CD8-positive, alpha-beta T cell (primary cell): ENCODE measurements at regions of chr20 and their contacts with region 1.

Region 1: GRCh38 chr20:48828022-48828743 is 384 bp upstream of the PREX1 start:
- DNase-seq: peak; percentile 72 to 94 (median 83)
- ATAC-seq: peak; percentile 69
- H3K4me3 ChIP-seq: peak overlapping the region in 1 of 2 experiments; percentile 49
- H3K4me3 Mint-ChIP-seq: peak overlapping the region; percentile 86
- H3K27ac ChIP-seq: peak overlapping the region; percentile 39 to 47
- H3K27ac Mint-ChIP-seq: peak overlapping the region; percentile 90
- H3K4me1 ChIP-seq: peaks cover 33% of the 10 kb centered on the region
- H3K4me1 Mint-ChIP-seq: peaks cover 35% of the 10 kb centered on the region
- H3K27me3 ChIP-seq: no peaks in the 10 kb centered on the region
- H3K27me3 Mint-ChIP-seq: no peaks in the 10 kb centered on the region
- CTCF ChIP-seq: no peak

Region 2: GRCh38 chr20:48657475-48658470 is 170.4 kb before region 1 on chr20:
- CTCF ChIA-PET with region 1: interaction called, 19 read pairs
- POLR2A ChIA-PET with region 1: no interaction called
- intact Hi-C with region 1: no loop called
- DNase-seq: peak; percentile 26 to 83 (median 68)
- ATAC-seq: peak; percentile 93
- H3K4me3 ChIP-seq: no peak overlapping the region
- H3K4me3 Mint-ChIP-seq: no peak overlapping the region
- H3K27ac ChIP-seq: no peak overlapping the region
- H3K27ac Mint-ChIP-seq: peak overlapping the region; percentile 74
- H3K4me1 ChIP-seq: no peaks in the 10 kb centered on the region
- H3K4me1 Mint-ChIP-seq: peaks cover 23% of the 10 kb centered on the region
- H3K27me3 ChIP-seq: no peaks in the 10 kb centered on the region
- H3K27me3 Mint-ChIP-seq: no peaks in the 10 kb centered on the region
- CTCF ChIP-seq: peak; percentile 96

Region 3: DNA sequence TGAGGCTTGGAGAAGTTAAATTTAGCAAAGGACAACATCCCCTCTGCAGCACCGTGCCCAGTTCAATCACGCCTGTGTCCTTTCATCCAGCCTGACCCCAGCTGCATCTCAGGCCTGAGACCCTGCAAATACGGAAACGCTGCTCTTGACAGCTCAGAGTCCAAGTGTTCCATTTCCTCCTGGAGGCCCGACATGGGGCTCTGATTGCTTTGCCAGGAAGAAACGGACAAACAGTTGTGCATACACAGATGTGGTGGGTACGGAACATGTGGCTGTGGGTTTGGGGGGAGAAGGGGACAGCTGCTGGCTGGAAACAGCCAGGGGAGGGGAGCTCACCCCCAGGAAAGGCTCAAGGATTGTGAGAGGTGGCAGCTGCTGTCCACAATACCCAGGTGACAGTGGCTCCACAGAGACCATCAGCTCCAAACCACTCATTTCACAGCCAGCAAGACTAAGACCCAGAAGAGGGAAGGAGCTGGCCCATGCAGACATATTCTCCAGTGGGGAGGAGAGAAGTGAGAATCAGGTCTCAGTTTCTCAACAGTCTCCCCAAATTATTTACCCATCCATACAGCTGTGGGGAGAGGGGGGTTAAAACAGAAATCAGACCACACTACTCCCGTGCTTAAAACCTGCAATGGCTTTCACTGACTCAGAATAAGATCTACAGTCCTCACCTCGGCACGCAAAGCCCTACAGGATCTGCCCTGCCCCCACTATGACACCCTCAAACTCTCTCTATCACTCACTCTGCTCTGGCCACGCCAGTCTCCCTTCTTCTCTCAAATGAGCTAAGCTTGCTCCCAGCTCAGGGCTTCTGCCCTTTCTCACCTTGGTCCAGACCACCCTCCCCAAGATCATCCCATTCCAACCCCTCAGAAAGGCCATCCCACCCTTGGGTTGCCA is 89.5 kb before region 1 on chr20:
- CTCF ChIA-PET with region 1: no interaction called
- POLR2A ChIA-PET with region 1: interaction called, 10 read pairs
- intact Hi-C with region 1: no loop called
- DNase-seq: peak in 6 of 9 experiments; percentile 39 to 72 (median 58)
- ATAC-seq: peak; percentile 78
- H3K4me3 ChIP-seq: no peak overlapping the region
- H3K4me3 Mint-ChIP-seq: peak overlapping the region; percentile 50
- H3K27ac ChIP-seq: peak overlapping the region in 1 of 2 experiments; percentile 55
- H3K27ac Mint-ChIP-seq: peak overlapping the region; percentile 89
- H3K4me1 ChIP-seq: peaks cover 61% of the 10 kb centered on the region
- H3K4me1 Mint-ChIP-seq: peaks cover 63% of the 10 kb centered on the region
- H3K27me3 ChIP-seq: no peaks in the 10 kb centered on the region
- H3K27me3 Mint-ChIP-seq: no peaks in the 10 kb centered on the region
- CTCF ChIP-seq: no peak

Region 4: GRCh38 chr20:48760403-48760983 is 67.7 kb before region 1 on chr20:
- CTCF ChIA-PET with region 1: interaction called, 4 read pairs
- POLR2A ChIA-PET with region 1: interaction called, 18 read pairs
- intact Hi-C with region 1: loop called (anchors 1 kb)
- DNase-seq: peak; percentile 34 to 95 (median 82)
- ATAC-seq: peak; percentile 69
- H3K4me3 ChIP-seq: peak overlapping the region; percentile 36 to 51
- H3K4me3 Mint-ChIP-seq: peak overlapping the region; percentile 76
- H3K27ac ChIP-seq: peak overlapping the region; percentile 87 to 93
- H3K27ac Mint-ChIP-seq: peak overlapping the region; percentile 99
- H3K4me1 ChIP-seq: peaks cover 78% of the 10 kb centered on the region
- H3K4me1 Mint-ChIP-seq: peaks cover 86% of the 10 kb centered on the region
- H3K27me3 ChIP-seq: no peaks in the 10 kb centered on the region
- H3K27me3 Mint-ChIP-seq: no peaks in the 10 kb centered on the region
- CTCF ChIP-seq: no peak

Region 5: DNA sequence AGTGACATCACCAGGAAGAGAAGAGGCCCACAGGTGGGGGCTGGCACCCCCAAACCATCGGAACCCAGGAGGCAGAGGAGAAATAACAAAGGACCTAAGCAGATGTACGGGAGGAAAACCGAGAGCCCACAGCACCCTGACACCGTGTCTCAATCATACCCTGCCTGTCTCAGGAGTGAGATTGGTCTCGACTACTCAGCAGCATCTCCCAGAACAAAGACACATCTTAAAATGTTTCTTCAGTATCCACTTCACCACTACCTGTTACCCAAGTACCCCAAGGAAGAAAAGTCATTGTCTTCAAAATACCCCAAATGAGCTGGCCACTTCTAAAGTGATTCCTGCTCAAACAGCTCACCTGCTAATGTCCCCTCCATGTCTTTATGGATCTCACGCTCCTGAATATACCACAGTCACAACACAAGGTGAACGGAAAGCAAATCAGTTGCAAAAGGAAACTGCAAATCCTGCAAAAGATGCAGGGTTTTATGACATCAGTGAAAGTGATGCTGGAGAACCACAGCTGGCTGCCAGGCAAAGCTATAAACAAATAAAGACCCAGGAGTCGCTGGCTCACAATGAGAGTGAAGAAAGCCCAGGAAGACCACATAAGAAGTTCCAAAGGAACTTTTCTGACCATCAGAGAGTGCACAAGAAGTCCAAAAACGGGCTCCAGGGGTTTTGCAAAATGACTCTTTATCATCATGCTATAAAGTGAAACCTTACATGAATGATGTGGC is 44.5 kb before region 1 on chr20:
- CTCF ChIA-PET with region 1: interaction called, 4 read pairs
- POLR2A ChIA-PET with region 1: no interaction called
- intact Hi-C with region 1: loop called in 1 of 2 experiments (anchors 5 kb)
- DNase-seq: peak in 5 of 9 experiments; percentile 35 to 83 (median 57)
- ATAC-seq: peak; percentile 69
- H3K4me3 ChIP-seq: no peak overlapping the region
- H3K4me3 Mint-ChIP-seq: no peak overlapping the region
- H3K27ac ChIP-seq: peak overlapping the region; percentile 4 to 58
- H3K27ac Mint-ChIP-seq: no peak overlapping the region
- H3K4me1 ChIP-seq: peaks cover 68% of the 10 kb centered on the region
- H3K4me1 Mint-ChIP-seq: peaks cover 53% of the 10 kb centered on the region
- H3K27me3 ChIP-seq: no peaks in the 10 kb centered on the region
- H3K27me3 Mint-ChIP-seq: no peaks in the 10 kb centered on the region
- CTCF ChIP-seq: no peak

Region 6: DNA sequence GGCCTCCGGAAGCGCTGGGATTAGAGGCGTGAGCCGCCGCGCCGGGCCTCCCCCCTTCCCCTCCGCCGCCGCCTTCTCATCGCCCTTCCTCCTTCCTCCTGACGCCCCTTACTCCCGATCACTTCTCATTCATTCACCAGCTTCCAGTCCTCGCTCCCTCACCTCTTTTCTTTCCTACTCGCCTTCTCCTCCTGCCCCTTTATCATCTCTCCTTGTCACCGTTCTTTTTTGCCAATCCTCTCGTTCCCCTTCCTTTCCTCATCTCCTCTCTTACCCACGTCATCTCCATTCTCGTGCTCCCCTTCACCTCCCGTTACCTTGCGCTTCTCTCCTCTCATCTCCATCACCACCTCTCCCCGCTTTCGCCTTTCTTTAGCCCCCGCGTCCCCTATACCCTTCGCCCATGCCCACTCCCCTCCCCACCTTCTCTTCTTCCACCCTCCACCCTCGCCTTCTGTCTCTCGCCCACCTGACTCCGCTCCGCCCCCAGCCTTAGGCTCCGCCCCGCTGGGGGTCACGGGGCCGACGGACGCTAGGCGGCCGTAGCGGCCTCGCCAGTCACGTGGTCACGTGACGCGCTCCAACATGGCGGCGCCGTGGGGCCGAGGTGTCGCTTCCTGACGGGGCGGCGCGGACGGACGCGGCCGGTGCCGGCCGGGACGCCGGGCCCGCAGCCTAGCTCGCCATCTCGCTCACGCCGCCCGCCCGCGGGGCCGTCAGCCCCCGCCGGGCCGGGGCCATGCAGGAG is 93.1 kb after region 1 on chr20 and contains the start of gene ARFGEF2:
- CTCF ChIA-PET with region 1: no interaction called
- POLR2A ChIA-PET with region 1: no interaction called
- intact Hi-C with region 1: loop called (anchors 1 kb)
- DNase-seq: peak; percentile 79 to 96 (median 89)
- ATAC-seq: peak; percentile 92
- H3K4me3 ChIP-seq: peak within 1 kb of the TSS; percentile 77 to 99
- H3K4me3 Mint-ChIP-seq: peak within 1 kb of the TSS; percentile 93
- H3K27ac ChIP-seq: peak within 1 kb of the TSS; percentile 93 to 94
- H3K27ac Mint-ChIP-seq: peak within 1 kb of the TSS; percentile 95
- H3K4me1 ChIP-seq: peaks cover 28% of the 10 kb centered on the region
- H3K4me1 Mint-ChIP-seq: peaks cover 49% of the 10 kb centered on the region
- H3K27me3 ChIP-seq: no peaks in the 10 kb centered on the region
- H3K27me3 Mint-ChIP-seq: no peaks in the 10 kb centered on the region
- CTCF ChIP-seq: no peak
- total RNA-seq, gene ARFGEF2: 25.7 to 26.7 TPM

Region 7: DNA sequence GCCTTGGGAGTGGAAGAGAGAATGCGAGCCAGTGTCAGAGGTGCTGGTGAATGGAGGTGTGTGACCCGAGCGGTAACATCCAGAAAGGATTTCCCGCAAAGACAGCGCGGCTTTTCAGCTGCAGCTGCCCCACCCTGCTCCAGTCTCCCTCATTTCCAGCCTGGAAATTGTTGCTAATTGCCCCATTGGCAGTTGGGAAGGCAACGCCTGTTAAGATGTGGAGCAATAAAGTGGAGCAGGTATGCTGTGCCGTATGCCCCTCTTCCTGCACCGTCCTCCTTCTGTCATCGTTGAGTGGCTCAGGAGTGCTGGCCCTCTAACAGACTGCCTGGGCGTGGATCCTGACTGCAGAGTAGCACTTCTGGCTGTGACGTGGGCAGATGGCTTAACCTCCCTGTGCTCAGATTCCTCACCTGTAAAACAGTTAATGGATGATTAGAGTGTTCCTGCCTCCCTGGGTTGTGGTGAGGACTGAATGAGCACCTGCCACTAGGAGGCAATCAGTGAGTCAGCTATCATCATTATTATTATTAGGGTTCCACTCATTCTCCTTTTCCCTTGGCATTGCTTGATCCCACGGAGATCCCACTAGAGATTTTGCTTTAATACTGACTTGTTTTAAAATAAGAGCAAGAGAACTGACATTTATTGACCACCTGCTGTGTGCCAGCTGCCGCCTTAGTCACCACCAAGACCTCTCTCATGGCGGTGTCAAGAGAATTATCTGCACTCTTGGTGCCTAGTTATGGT is 105.0 kb after region 1 on chr20:
- CTCF ChIA-PET with region 1: no interaction called
- POLR2A ChIA-PET with region 1: no interaction called
- intact Hi-C with region 1: no loop called
- DNase-seq: no peak
- ATAC-seq: no peak
- H3K4me3 ChIP-seq: no peak overlapping the region
- H3K4me3 Mint-ChIP-seq: no peak overlapping the region
- H3K27ac ChIP-seq: no peak overlapping the region
- H3K27ac Mint-ChIP-seq: no peak overlapping the region
- H3K4me1 ChIP-seq: peaks cover 5% of the 10 kb centered on the region
- H3K4me1 Mint-ChIP-seq: peaks cover 33% of the 10 kb centered on the region
- H3K27me3 ChIP-seq: no peaks in the 10 kb centered on the region
- H3K27me3 Mint-ChIP-seq: no peaks in the 10 kb centered on the region
- CTCF ChIP-seq: no peak

Region 8: DNA sequence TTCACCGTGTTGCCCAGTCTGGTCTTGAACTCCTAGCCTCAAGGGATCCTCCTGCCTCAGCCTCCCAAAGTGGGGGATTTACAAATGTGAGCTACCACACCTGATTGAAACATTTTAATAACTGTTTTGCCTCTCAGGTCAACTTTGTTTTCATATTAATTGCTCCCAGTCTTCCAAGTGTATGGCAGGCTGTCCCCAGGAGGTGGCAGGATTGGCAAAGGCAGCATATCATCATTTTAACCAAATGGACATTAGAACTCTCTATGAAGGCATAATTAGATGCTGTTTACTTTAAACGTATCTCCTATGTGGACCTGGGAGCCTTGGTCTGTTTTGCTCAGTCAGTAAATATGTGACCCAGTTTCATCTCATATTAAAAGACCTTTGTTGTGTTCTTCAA is 158.7 kb after region 1 on chr20:
- CTCF ChIA-PET with region 1: no interaction called
- POLR2A ChIA-PET with region 1: no interaction called
- intact Hi-C with region 1: no loop called
- DNase-seq: no peak
- ATAC-seq: no peak
- H3K4me3 ChIP-seq: no peak overlapping the region
- H3K4me3 Mint-ChIP-seq: no peak overlapping the region
- H3K27ac ChIP-seq: no peak overlapping the region
- H3K27ac Mint-ChIP-seq: no peak overlapping the region
- H3K4me1 ChIP-seq: no peaks in the 10 kb centered on the region
- H3K4me1 Mint-ChIP-seq: no peaks in the 10 kb centered on the region
- H3K27me3 ChIP-seq: no peaks in the 10 kb centered on the region
- H3K27me3 Mint-ChIP-seq: no peaks in the 10 kb centered on the region
- CTCF ChIP-seq: no peak

Region 9: DNA sequence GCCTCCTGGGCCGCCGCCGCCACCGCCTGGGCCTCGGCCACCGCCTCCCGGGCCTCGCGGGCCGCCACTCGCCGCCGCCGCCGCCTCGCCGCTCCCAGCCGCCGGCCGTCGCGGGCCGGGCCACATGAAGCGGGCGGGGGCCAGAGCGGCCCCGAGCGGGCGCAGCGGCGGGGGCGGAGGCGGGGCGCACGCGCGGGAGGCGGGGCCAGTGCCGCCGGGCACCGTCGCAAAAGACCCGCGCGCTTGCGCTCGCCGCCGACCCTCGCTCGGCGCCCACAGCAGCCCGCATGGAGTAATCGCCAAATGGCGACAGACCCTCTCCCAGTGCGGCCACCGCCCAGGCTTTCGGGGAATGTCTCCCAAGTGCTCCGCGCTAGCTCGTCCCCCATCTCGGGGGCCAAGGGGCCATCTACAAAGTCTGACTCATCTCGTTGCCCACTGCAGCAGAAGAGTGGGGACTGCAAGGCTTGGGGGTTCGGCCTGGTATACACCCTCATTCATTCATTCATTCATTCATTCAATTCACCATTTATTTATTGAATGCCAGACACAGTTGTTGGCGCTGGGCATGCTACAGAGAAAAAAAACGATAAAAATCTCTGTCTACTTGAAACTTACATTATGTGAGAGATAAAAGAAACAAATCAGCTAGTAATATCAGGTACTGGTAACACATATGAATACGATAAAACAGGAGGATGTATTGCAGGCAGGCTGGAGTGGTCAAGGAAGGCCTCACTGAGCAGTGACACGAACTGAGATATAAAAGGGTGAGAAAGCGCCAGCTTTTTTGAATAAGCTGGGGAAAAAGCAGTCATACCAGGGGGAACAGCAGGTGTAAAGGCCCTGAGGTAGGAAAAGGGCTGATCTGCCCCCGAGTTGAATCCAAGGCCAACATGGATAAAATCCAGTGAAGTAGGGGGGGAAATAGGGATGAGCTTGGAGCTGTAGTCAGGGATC is 885.9 kb after region 1 on chr20 and contains the start of gene B4GALT5:
- CTCF ChIA-PET with region 1: no interaction called
- POLR2A ChIA-PET with region 1: no interaction called
- intact Hi-C with region 1: loop called (anchors 5 kb)
- DNase-seq: peak; percentile 26 to 83 (median 59)
- ATAC-seq: peak; percentile 85
- H3K4me3 ChIP-seq: peak within 1 kb of the TSS; percentile 79 to 86
- H3K4me3 Mint-ChIP-seq: peak within 1 kb of the TSS; percentile 94
- H3K27ac ChIP-seq: peak within 1 kb of the TSS; percentile 51 to 75
- H3K27ac Mint-ChIP-seq: peak within 1 kb of the TSS; percentile 87
- H3K4me1 ChIP-seq: peaks cover 32% of the 10 kb centered on the region
- H3K4me1 Mint-ChIP-seq: peaks cover 49% of the 10 kb centered on the region
- H3K27me3 ChIP-seq: no peaks in the 10 kb centered on the region
- H3K27me3 Mint-ChIP-seq: no peaks in the 10 kb centered on the region
- CTCF ChIP-seq: no peak
- total RNA-seq, gene B4GALT5: 7.8 to 7.9 TPM

Region 10: DNA sequence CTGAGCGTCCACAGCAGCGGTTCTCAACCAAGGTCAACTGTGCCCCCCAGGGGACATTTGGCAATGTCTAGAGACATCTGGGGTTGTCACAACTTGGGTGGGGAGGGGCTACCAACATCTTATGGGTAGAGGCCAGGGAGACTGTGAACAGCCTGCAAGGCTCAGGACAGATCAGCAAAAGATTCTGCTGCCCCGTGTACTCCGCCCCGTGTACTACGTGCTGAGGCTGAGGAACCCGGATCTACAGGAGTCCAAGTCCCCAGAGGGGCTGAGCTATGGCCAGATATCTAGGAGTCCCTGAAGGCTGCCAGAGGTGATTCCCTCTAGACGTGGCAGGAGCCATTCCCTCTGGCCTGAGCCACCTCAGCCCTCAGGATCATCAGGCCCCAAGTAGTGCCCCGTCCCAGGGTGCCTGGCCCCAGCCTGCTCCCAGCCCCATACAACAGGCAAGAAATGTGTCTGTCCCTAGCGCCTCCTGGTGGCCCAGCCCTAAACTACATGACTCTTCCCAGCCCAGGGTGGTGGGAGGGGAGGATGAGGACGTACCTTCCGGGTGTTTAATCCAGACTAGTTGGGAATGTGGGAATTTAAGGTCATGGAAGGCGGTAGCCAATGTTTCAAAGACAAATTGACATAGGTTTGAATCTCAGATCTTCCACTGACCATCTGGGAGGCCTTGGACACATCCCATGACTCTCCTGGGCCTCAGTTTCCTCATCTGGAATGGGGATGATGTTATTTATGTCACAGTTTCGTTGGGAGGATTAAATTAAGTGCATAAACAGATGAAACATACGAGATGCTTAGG is 1632.5 kb after region 1 on chr20:
- CTCF ChIA-PET with region 1: no interaction called
- POLR2A ChIA-PET with region 1: no interaction called
- intact Hi-C with region 1: no loop called
- DNase-seq: peak; percentile 65 to 85 (median 81)
- ATAC-seq: peak; percentile 91
- H3K4me3 ChIP-seq: no peak overlapping the region
- H3K4me3 Mint-ChIP-seq: no peak overlapping the region
- H3K27ac ChIP-seq: no peak overlapping the region
- H3K27ac Mint-ChIP-seq: no peak overlapping the region
- H3K4me1 ChIP-seq: peaks cover 3% of the 10 kb centered on the region
- H3K4me1 Mint-ChIP-seq: peaks cover 4% of the 10 kb centered on the region
- H3K27me3 ChIP-seq: peaks cover 0 to 5% of the 10 kb centered on the region in 2 experiments
- H3K27me3 Mint-ChIP-seq: peaks cover 12% of the 10 kb centered on the region
- CTCF ChIP-seq: peak; percentile 72